ENCODE measurements at regions of chr20 and their contacts with region 1.

Region 1: DNA sequence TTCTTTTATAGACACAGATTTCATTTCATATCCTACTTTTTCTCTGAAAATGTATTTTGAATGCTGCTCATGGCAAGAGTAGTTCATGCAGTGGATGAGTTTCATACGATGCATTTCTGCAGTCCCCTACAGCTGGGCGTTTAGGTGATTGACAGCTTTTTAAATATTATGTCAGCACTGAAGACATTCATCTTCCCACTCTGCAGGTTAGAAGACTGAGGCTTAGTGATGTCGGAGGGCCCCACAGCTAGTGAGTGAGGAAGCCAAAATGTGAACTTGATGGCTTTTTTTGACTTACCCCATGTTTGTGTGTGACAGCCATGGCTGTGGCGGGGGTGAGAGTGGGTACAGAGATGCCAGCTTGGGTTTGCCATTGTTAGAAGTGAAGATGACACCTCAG is 33.5 kb downstream of the MYH7B start:
- DNase-seq: no peak
- H3K4me3 ChIP-seq: no peak overlapping the region
- H3K27ac ChIP-seq: no peak overlapping the region
- H3K4me1 ChIP-seq: no peaks in the 10 kb centered on the region
- H3K27me3 ChIP-seq: peaks cover 0 to 17% (median 0%) of the 10 kb centered on the region in 5 experiments

Region 2: DNA sequence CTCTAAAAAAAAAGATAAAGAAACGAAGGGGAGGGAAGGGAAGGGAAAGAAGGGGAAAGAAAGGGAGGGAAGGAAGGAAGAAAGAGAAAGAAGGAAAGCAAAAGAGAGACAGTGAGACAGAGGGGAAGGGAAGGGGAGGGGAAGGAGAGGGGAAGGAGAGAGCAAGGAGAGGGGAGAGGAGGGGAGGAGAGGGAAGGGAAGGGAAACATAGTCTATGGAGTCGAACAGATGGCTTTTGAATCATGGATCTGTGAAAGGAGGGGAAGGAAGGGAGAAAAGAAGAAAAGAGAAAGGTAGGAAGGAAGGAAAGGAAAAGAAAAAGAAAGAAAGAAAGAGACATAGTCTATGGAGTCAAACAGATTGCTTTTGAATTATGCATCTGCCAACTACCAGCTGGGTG is 147.0 kb before region 1 on chr20:
- CTCF ChIA-PET with region 1: no interaction called
- POLR2A ChIA-PET with region 1: interaction called, 14 read pairs
- DNase-seq: no peak
- H3K4me3 ChIP-seq: no peak overlapping the region
- H3K27ac ChIP-seq: no peak overlapping the region
- H3K4me1 ChIP-seq: no peaks in the 10 kb centered on the region
- H3K27me3 ChIP-seq: no peaks in the 10 kb centered on the region

Region 3: GRCh38 chr20:34968042-34968775 is 20.9 kb before region 1 on chr20:
- CTCF ChIA-PET with region 1: no interaction called
- POLR2A ChIA-PET with region 1: no interaction called
- DNase-seq: no peak
- H3K4me3 ChIP-seq: no peak overlapping the region
- H3K27ac ChIP-seq: no peak overlapping the region
- H3K4me1 ChIP-seq: no peaks in the 10 kb centered on the region
- H3K27me3 ChIP-seq: no peaks in the 10 kb centered on the region

Measured in common myeloid progenitor, CD34-positive (primary cell).